ENCODE measurements at regions of chr16 and their contacts with region 1.

Region 1: DNA sequence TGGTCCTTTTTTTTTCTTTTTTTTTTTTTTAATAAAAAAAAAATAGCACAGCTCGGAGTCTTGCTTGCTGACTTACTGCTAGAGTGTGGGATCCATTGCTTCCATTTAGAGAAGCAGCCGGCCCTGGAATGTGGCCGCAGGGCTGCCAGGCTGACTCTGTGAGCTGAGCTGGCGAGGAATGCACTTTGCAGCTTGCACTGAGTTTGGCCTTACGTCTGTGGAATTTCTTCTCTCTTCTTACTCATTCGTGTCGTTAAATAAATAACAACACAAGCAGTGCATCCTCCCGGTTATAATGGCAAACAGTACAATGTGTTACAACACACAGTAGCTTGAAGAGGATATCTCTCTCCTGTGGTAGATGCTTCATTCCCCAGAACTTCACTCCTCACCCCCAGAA is 69.2 kb downstream of the PRKCB start:
- DNase-seq: peak; percentile 81
- H3K4me3 ChIP-seq: no peak overlapping the region
- H3K27ac ChIP-seq: peak overlapping the region; percentile 67 to 89 (median 80)
- H3K4me1 ChIP-seq: peaks cover 0 to 41% (median 28%) of the 10 kb centered on the region in 4 donors
- H3K27me3 ChIP-seq: no peaks in the 10 kb centered on the region
- CTCF ChIP-seq: no peak
- EP300 ChIP-seq: no peak
- POLR2A ChIP-seq: no peak

Region 2: GRCh38 chr16:23835390-23836077 is 69.5 kb before region 1 on chr16 and contains the start of gene PRKCB:
- intact Hi-C with region 1: loop called (anchors 5 kb)
- DNase-seq: peak; percentile 89
- H3K4me3 ChIP-seq: peak within 1 kb of the TSS; percentile 56 to 83 (median 70)
- H3K27ac ChIP-seq: peak within 1 kb of the TSS in 3 of 4 donors; percentile 58 to 72 (median 60)
- H3K4me1 ChIP-seq: peaks cover 0 to 24% (median 18%) of the 10 kb centered on the region in 4 donors
- H3K27me3 ChIP-seq: no peaks in the 10 kb centered on the region
- CTCF ChIP-seq: no peak
- EP300 ChIP-seq: no peak
- POLR2A ChIP-seq: no peak
- total RNA-seq, gene PRKCB: 12.1 to 43.8 (median 23.8) TPM

Region 3: DNA sequence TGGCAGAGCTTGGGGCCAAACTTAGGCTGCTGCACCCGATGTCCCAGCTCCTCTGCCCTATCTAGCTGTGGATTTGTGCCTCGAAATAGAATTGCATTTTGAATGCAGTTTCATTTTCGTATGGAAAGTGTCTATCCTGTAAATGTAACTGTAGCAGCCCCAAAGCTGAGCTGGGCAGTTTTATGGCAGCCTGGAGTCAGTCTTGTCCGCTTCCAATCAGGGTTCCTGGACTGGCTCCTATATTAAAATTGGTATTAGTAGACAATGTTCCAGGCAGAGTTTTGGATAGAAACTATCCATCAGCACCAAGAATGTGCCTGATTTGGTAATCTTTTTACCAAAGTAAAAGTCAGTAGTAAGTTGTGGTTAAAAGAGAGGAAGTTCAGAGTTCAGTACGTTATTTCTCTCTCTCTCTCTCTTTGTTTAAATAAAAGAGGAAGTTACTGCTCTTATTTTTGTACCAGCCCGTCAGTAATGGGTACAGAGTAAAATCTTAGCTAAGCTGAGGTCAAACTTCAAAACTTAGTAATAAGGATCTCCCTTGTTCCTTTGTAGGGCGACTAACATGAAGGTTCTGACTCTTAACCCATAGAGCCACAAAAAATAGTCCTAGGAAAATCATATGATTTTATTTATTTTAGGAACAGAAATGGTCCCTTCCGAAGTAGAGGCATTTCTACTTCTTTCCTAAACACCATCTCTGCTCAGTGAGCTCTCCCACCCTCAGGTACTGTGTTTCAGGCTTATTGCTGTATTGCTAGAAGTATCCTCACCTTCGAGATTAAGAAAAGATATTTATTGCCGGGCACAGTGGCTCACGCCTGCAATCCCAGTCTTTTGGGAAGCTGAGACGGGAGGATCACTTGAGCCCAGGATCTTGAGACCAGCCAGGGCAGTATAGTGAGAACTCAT is 41.3 kb before region 1 on chr16:
- intact Hi-C with region 1: loop called (anchors 5 kb)
- DNase-seq: no peak
- H3K4me3 ChIP-seq: peak overlapping the region; percentile 14 to 44 (median 40)
- H3K27ac ChIP-seq: peak overlapping the region; percentile 34 to 81 (median 68)
- H3K4me1 ChIP-seq: peaks cover 0 to 49% (median 32%) of the 10 kb centered on the region in 4 donors
- H3K27me3 ChIP-seq: no peaks in the 10 kb centered on the region
- CTCF ChIP-seq: no peak
- EP300 ChIP-seq: no peak
- POLR2A ChIP-seq: no peak

Measured in sigmoid colon (tissue), 7 donors.